ENCODE measurements at regions of chr21 and their contacts with region 1.

Region 1: GRCh38 chr21:41283211-41283818 is 33.3 kb upstream of the FAM3B start:
- DNase-seq: peak; percentile 89
- H3K4me3 Mint-ChIP-seq: no peak overlapping the region
- H3K27ac Mint-ChIP-seq: no peak overlapping the region
- H3K4me1 Mint-ChIP-seq: no peaks in the 10 kb centered on the region
- H3K27me3 Mint-ChIP-seq: no peaks in the 10 kb centered on the region
- CTCF ChIP-seq: peak; percentile 82

Region 2: DNA sequence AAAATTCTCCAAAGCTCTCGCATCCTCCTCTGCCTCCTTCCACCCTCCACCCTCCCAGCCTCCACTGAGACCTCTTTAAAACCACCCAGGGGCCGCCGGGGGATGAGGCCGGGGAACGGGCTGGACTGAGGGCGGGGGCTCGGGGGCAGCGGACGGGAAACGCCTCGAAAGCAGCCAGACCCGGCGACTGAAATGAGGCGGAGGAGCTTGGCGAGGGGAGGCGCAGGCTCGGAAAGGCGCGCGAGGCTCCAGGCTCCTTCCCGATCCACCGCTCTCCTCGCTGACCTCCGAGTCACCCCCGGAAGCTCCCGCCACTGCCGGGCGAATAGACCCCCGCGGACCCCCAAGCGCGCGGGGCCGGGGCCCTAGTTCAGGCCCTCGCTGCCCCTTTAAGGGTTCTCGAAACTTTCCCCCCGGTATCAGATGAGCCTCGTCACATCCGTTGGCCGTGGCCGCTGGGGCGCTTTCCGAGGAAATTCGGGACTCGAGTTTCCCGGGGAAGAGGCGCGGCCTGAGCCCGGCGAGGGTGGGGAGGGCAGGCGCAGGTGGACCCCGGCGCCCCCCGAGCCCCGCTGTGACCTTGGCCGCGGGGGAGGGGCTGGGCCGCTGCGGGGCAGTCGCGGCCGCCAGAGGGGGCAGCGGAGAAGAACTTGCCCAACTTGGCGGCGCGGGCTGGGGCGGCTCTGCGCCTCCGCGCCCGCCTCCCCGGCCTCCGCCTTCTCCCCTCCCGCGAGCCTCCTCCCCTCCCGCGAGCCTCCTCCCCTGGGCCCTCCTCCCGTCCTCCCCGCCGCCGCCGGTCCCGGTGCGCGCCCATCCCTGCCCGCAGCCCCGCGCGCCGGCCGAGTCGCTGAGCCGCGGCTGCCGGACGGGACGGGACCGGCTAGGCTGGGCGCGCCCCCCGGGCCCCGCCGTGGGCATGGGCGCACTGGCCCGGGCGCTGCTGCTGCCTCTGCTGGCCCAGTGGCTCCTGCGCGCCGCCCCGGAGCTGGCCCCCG is 115.7 kb before region 1 on chr21 and contains the start of gene BACE2:
- CTCF ChIA-PET with region 1: interaction called, 5 read pairs
- POLR2A ChIA-PET with region 1: interaction called, 9 read pairs
- intact Hi-C with region 1: loop called (anchors 10 kb)
- DNase-seq: peak; percentile 81
- H3K4me3 Mint-ChIP-seq: peak within 1 kb of the TSS; percentile 83
- H3K27ac Mint-ChIP-seq: peak within 1 kb of the TSS; percentile 58
- H3K4me1 Mint-ChIP-seq: peaks cover 32% of the 10 kb centered on the region
- H3K27me3 Mint-ChIP-seq: no peaks in the 10 kb centered on the region
- CTCF ChIP-seq: peak; percentile 79
- total RNA-seq, gene BACE2: 21.3 and 22.0 TPM in 2 replicates

Region 3: DNA sequence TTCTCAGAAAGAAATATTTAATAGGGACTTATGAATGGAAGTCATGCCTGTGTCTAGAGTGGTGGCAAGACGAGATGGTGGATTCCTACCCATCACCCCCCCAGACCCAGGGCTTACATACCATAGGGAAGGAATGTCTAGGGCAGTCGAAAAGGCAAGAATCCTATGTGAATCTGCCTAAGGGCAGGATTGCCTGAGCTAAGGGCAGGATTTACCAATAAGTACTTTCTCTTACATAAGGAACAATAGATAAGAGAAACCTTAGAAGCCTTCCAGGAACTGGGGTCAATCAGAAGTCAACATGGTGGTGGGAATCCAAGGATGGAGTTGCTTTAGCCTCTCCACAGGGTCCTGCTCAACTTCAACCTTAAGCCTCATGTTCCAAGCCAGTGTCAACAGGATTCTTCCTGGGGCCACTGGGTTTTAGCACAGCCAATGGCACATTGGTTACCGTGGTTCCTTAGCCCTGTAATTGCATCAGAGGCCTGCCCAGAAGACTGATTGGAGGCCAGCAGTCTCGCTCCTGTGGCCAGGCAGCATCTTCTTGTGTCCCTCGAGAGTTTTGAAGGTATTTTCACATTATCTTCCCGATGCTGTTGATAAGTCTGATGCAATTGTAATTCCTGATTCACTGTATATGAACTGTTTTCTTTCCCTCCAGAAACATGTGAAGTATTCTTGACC is 94.7 kb before region 1 on chr21:
- CTCF ChIA-PET with region 1: no interaction called
- POLR2A ChIA-PET with region 1: no interaction called
- intact Hi-C with region 1: no loop called
- DNase-seq: no peak
- H3K4me3 Mint-ChIP-seq: no peak overlapping the region
- H3K27ac Mint-ChIP-seq: no peak overlapping the region
- H3K4me1 Mint-ChIP-seq: peaks cover 14% of the 10 kb centered on the region
- H3K27me3 Mint-ChIP-seq: no peaks in the 10 kb centered on the region
- CTCF ChIP-seq: no peak

Region 4: DNA sequence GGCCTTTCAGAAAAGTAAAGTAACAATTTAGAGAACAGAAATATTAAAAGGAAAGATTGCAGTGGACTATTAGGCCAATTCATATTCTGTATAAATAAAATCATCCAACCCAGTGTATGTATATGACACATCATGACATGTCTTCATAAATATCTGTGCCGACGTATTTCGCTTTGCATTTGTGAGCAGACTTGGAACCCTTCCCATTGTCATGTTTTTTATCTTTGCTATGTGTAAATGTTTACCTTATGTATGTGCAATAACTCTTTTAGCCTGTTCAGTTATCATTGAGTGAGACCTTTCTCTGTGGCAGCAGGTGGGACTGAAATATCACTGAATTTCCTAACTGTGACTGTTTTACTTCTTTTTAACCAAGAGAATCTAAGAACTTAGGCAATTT is 24.7 kb before region 1 on chr21:
- CTCF ChIA-PET with region 1: no interaction called
- POLR2A ChIA-PET with region 1: no interaction called
- intact Hi-C with region 1: no loop called
- DNase-seq: peak; percentile 34
- H3K4me3 Mint-ChIP-seq: no peak overlapping the region
- H3K27ac Mint-ChIP-seq: no peak overlapping the region
- H3K4me1 Mint-ChIP-seq: no peaks in the 10 kb centered on the region
- H3K27me3 Mint-ChIP-seq: no peaks in the 10 kb centered on the region
- CTCF ChIP-seq: no peak

Region 5: GRCh38 chr21:41451753-41452676 is 168.7 kb after region 1 on chr21:
- CTCF ChIA-PET with region 1: interaction called, 52 read pairs
- POLR2A ChIA-PET with region 1: no interaction called
- intact Hi-C with region 1: no loop called
- DNase-seq: peak; percentile 16
- H3K4me3 Mint-ChIP-seq: no peak overlapping the region
- H3K27ac Mint-ChIP-seq: no peak overlapping the region
- H3K4me1 Mint-ChIP-seq: no peaks in the 10 kb centered on the region
- H3K27me3 Mint-ChIP-seq: no peaks in the 10 kb centered on the region
- CTCF ChIP-seq: no peak

Region 6: GRCh38 chr21:41601573-41602368 is 318.5 kb after region 1 on chr21:
- CTCF ChIA-PET with region 1: interaction called, 21 read pairs
- POLR2A ChIA-PET with region 1: interaction called, 3 read pairs
- intact Hi-C with region 1: no loop called
- DNase-seq: peak; percentile 37
- H3K4me3 Mint-ChIP-seq: no peak overlapping the region
- H3K27ac Mint-ChIP-seq: peak overlapping the region; percentile 61
- H3K4me1 Mint-ChIP-seq: peaks cover 6% of the 10 kb centered on the region
- H3K27me3 Mint-ChIP-seq: peaks cover 12% of the 10 kb centered on the region
- CTCF ChIP-seq: no peak

Region 7: DNA sequence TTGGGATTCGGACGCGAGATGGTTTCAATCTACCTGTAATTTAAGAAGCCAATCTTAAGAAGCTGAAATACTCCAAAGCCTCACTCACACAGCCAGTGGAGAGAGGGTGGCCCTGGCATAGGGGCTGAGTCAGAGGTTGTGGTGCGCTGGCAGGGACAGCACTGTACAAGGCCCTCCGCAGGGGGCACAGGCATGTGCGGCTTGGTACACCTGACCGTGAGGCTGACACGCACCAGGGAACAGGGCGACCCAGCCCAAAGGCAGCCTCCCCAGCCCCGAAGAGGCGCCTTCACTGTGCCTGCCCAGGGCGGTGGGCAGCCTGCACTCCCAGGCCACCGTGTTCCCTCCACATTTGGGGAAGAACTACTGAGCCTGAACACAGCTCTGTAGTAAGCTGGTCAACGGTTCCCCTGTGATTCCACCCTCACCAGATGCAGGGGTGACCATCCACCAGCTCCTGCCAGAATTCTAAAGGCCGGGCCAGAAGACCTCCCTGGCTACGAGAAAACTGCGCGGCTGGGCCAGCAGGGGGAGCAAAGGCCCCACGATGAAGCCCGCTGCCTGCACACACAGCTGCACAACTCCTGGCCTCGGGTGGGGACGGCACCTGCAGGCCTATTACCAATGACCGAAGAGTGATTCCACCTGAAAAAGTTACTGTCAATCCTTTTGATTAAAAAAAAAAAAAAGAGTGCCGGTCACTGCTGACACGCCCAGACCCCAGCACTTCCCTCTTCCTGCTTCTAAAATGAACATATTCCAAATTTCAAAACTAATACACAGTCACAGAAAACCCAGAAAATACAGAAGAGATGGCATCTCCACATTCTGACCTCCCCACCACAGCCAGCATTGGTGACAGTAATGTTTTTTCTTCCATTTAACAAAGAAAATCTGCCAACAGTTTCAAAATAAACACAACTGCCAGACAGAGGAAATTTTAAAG is 533.2 kb after region 1 on chr21:
- CTCF ChIA-PET with region 1: interaction called, 31 read pairs
- POLR2A ChIA-PET with region 1: interaction called, 4 read pairs
- intact Hi-C with region 1: loop called (anchors 1 kb)
- DNase-seq: peak; percentile 27
- H3K4me3 Mint-ChIP-seq: no peak overlapping the region
- H3K27ac Mint-ChIP-seq: peak overlapping the region; percentile 31
- H3K4me1 Mint-ChIP-seq: peaks cover 9% of the 10 kb centered on the region
- H3K27me3 Mint-ChIP-seq: no peaks in the 10 kb centered on the region
- CTCF ChIP-seq: peak; percentile 32